GM13976 (cell line): ENCODE measurements at regions of chr9 and their contacts with region 1.

Region 1: DNA sequence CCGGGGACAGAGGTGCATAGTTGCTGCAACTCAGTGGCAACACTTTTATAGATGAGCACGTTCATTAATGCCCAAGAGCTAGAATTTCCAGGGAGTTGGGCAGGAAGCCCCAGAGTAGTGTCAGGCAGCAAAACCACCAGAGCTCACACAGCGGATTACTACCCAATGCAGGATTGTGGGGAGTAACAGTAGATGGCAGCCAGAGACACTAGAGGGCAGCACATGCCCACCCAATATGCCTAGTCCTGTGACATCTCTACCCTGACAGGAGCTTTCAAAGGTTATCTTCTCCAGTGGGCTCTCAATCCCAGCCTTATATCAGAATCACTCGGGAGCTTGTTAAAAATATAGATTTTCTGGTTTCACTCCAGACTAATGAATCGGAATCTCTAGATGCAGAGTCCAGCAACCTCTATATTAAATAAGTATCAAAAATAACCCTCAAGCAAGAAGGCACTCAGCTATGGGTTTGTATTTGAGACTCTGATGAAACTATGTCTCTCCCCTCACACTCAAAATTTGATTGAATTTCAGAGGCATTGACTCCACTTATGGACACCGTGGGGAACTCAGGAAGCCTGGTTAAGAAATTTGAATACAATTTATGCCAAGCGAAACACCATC is 58.4 kb upstream of the PHF24 start:
- DNase-seq: peak; percentile 69
- CTCF ChIP-seq: peak; percentile 82

Region 2: GRCh38 chr9:34989003-34989945 is 89.6 kb after region 1 on chr9 and contains the start of gene DNAJB5:
- in situ Hi-C with region 1: loop called (anchors 10 kb)
- DNase-seq: peak; percentile 97
- CTCF ChIP-seq: no peak

Region 3: GRCh38 chr9:35042081-35042604 is 142.5 kb after region 1 on chr9:
- in situ Hi-C with region 1: loop called (anchors 10 kb)
- DNase-seq: no peak
- CTCF ChIP-seq: no peak